HCT116 (cell line): ENCODE measurements at regions of chr1 and their contacts with region 1.

Region 1: DNA sequence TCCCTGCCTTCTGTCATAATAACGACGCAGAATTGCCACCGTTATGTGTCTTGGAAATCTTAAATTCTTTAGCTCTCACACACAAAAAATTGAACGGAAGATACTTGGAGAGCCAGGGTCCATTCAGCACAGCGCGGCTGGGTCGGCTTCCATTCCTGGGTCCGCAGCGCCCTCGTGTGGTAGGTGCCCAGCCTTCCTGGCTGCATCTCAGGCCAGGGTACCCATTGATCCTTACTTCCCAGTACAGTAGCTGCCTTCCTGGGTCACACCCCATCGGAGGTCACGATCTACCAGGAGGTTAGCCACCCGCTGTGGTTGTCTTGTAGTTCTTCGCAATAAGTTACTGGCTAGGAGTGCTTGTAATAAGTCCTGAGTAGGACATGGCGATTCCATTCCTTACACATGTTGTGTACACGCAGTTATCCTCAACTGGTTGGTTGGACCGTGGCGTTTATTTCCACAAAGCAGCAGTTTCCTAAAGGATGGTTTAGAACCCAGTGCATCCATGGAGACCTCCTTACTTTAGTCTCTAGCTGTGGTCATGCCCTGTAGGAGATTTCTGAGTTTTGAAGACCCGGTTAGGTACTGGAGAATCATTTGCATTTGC is 9.9 kb upstream of the MTARC1 start:
- DNase-seq: peak; percentile 35
- ATAC-seq: peak; percentile 100
- H3K4me3 ChIP-seq: no peak overlapping the region
- H3K27ac ChIP-seq: no peak overlapping the region
- H3K4me1 ChIP-seq: no peaks in the 10 kb centered on the region
- H3K27me3 ChIP-seq: no peaks in the 10 kb centered on the region
- CTCF ChIP-seq: peak; percentile 78 to 99 (median 92)
- POLR2A ChIP-seq: no peak
- RAD21 ChIP-seq: peak; percentile 95

Region 2: DNA sequence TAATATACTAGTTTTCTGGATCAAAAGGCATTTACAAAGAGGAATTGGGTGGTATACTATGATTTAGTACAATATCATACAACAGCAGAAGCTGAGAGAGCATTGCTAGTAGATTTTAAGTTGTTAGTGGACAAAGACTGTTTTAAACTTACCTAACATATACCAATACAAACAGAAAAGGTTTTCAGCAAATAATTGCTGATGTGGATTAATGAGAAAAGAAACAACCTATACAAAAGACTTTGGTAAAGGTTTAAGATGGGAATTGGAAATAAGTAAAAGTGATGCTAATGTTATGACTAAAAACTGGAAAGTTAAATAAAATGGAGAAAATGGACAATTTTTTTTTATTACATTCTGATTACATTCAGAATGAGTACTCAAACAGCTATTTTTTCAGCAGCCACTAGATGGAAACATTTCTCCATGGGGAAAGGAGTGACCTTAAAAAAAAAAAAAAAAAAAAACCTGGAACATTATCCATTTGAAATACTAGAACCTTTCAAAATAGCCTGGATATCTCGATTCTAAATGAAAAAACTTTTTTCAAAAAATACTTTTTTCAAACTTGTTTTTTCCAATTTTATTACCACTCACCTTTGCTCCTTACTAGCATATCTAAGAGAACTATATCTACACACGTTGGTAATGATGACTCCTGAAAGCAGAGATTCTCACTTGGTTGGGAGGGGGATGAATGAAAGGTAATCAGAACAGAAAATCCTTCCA is 785.9 kb before region 1 on chr1:
- CTCF ChIA-PET with region 1: no interaction called
- POLR2A ChIA-PET with region 1: no interaction called
- RAD21 ChIA-PET with region 1: no interaction called
- intact Hi-C with region 1: loop called (anchors 10 kb)
- DNase-seq: peak; percentile 8
- ATAC-seq: peak; percentile 38; the same call in 1 of the 2 replicates
- H3K4me3 ChIP-seq: no peak overlapping the region
- H3K27ac ChIP-seq: no peak overlapping the region
- H3K4me1 ChIP-seq: no peaks in the 10 kb centered on the region
- H3K27me3 ChIP-seq: no peaks in the 10 kb centered on the region
- CTCF ChIP-seq: peak; percentile 42 to 77 (median 63); a peak in 5 of 6 replicates
- POLR2A ChIP-seq: no peak
- RAD21 ChIP-seq: peak; percentile 62

Region 3: DNA sequence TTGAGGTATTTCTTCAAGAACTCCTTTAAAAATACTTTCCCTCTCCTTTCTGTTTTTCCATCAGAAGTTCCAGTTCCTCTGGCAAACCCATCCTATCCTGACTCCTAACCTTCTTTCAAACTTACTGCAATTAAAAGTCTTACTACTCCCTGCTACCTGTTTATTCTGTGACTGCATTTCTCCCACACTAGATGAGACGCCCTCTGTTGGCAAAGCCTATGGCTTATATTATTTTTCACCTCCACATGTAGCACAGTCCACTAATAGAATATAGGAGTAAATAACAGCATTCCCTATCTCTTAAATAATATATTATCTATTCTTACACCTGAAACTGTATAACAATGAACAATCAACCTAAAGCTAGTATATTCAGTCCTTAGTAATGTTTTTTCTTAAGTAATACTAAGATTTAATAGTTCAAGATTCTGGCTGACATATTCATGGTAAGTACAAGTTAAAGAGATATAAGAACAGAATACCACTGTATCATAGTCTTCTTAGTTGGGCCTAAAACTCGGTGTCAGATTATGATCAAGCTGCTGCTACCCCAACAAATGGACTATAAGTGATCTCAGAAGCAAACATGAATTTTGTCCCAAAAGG is 559.3 kb before region 1 on chr1:
- CTCF ChIA-PET with region 1: interaction called, 19 read pairs
- POLR2A ChIA-PET with region 1: no interaction called
- RAD21 ChIA-PET with region 1: no interaction called
- intact Hi-C with region 1: loop called (anchors 2 kb)
- DNase-seq: peak; percentile 4
- ATAC-seq: peak; percentile 80
- H3K4me3 ChIP-seq: no peak overlapping the region
- H3K27ac ChIP-seq: no peak overlapping the region
- H3K4me1 ChIP-seq: no peaks in the 10 kb centered on the region
- H3K27me3 ChIP-seq: no peaks in the 10 kb centered on the region
- CTCF ChIP-seq: peak; percentile 44 to 68 (median 65); a peak in 5 of 6 replicates
- POLR2A ChIP-seq: no peak
- RAD21 ChIP-seq: no peak

Region 4: GRCh38 chr1:220294846-220295301 is 481.9 kb before region 1 on chr1:
- CTCF ChIA-PET with region 1: interaction called, 21 read pairs
- POLR2A ChIA-PET with region 1: no interaction called
- RAD21 ChIA-PET with region 1: no interaction called
- intact Hi-C with region 1: loop called (anchors 1 kb)
- DNase-seq: no peak
- ATAC-seq: no peak
- H3K4me3 ChIP-seq: no peak overlapping the region
- H3K27ac ChIP-seq: no peak overlapping the region
- H3K4me1 ChIP-seq: no peaks in the 10 kb centered on the region
- H3K27me3 ChIP-seq: no peaks in the 10 kb centered on the region
- CTCF ChIP-seq: no peak
- POLR2A ChIP-seq: no peak
- RAD21 ChIP-seq: no peak

Region 5: GRCh38 chr1:220370031-220370700 is 406.7 kb before region 1 on chr1:
- CTCF ChIA-PET with region 1: interaction called, 3 read pairs
- POLR2A ChIA-PET with region 1: no interaction called
- RAD21 ChIA-PET with region 1: no interaction called
- intact Hi-C with region 1: loop called (anchors 5 kb)
- DNase-seq: peak; percentile 63
- ATAC-seq: peak; percentile 90
- H3K4me3 ChIP-seq: peak overlapping the region in 1 of 2 experiments; percentile 7; a peak in 1 of 4 replicates
- H3K27ac ChIP-seq: peak overlapping the region; percentile 7; the same call in 1 of the 2 replicates
- H3K4me1 ChIP-seq: peaks cover 13 to 37% of the 10 kb centered on the region in 2 experiments
- H3K27me3 ChIP-seq: no peaks in the 10 kb centered on the region
- CTCF ChIP-seq: no peak
- POLR2A ChIP-seq: no peak
- RAD21 ChIP-seq: no peak

Region 6: GRCh38 chr1:220690140-220691025 is 86.4 kb before region 1 on chr1 and contains the start of gene C1orf115:
- CTCF ChIA-PET with region 1: no interaction called
- POLR2A ChIA-PET with region 1: no interaction called
- RAD21 ChIA-PET with region 1: interaction called in 1 of 2 experiments, 3 read pairs
- intact Hi-C with region 1: loop called (anchors 1 kb)
- DNase-seq: peak; percentile 71
- ATAC-seq: peak; percentile 92
- H3K4me3 ChIP-seq: peak within 1 kb of the TSS; percentile 75 to 84
- H3K27ac ChIP-seq: peak within 1 kb of the TSS; percentile 64; the same call in 1 of the 2 replicates
- H3K4me1 ChIP-seq: peaks cover 0 to 18% of the 10 kb centered on the region in 2 experiments; a peak in 2 of 4 replicates
- H3K27me3 ChIP-seq: no peaks in the 10 kb centered on the region
- CTCF ChIP-seq: peak; percentile 87 to 98 (median 92)
- POLR2A ChIP-seq: peak; percentile 53
- RAD21 ChIP-seq: peak; percentile 61
- total RNA-seq, gene C1orf115: 16.8 TPM